Mammary epithelial cell (primary cell): ENCODE measurements at regions of chr5 and their contacts with region 1.

Region 1: GRCh38 chr5:1763548-1763911 is 36.1 kb downstream of the MRPL36 start:
- DNase-seq: peak; percentile 32
- H3K4me3 ChIP-seq: no peak overlapping the region
- H3K27ac ChIP-seq: no peak overlapping the region
- H3K4me1 ChIP-seq: no peaks in the 10 kb centered on the region
- H3K27me3 ChIP-seq: no peaks in the 10 kb centered on the region
- CTCF ChIP-seq: peak; percentile 76 to 80

Region 2: GRCh38 chr5:1851290-1851934 is 87.9 kb after region 1 on chr5:
- CTCF ChIA-PET with region 1: no interaction called
- dilution Hi-C with region 1: loop called (anchors 5 kb)
- in situ Hi-C with region 1: no loop called
- intact Hi-C with region 1: no loop called
- DNase-seq: no peak
- H3K4me3 ChIP-seq: no peak overlapping the region
- H3K27ac ChIP-seq: no peak overlapping the region
- H3K4me1 ChIP-seq: peaks cover 3% of the 10 kb centered on the region
- H3K27me3 ChIP-seq: no peaks in the 10 kb centered on the region
- CTCF ChIP-seq: no peak

Region 3: GRCh38 chr5:2017540-2018389 is 254.2 kb after region 1 on chr5:
- CTCF ChIA-PET with region 1: no interaction called
- dilution Hi-C with region 1: no loop called
- in situ Hi-C with region 1: loop called in 1 of 2 experiments (anchors 25 kb)
- intact Hi-C with region 1: loop called (anchors 1 kb)
- DNase-seq: no peak
- H3K4me3 ChIP-seq: no peak overlapping the region
- H3K27ac ChIP-seq: no peak overlapping the region
- H3K4me1 ChIP-seq: peaks cover 13% of the 10 kb centered on the region
- H3K27me3 ChIP-seq: no peaks in the 10 kb centered on the region
- CTCF ChIP-seq: peak; percentile 60 to 67

Region 4: GRCh38 chr5:2038321-2039179 is 275.0 kb after region 1 on chr5:
- CTCF ChIA-PET with region 1: interaction called, 5 read pairs
- dilution Hi-C with region 1: no loop called
- in situ Hi-C with region 1: no loop called
- intact Hi-C with region 1: loop called (anchors 1 kb)
- DNase-seq: peak; percentile 42
- H3K4me3 ChIP-seq: peak overlapping the region; percentile 53 to 58 (median 57)
- H3K27ac ChIP-seq: no peak overlapping the region
- H3K4me1 ChIP-seq: peaks cover 12% of the 10 kb centered on the region
- H3K27me3 ChIP-seq: no peaks in the 10 kb centered on the region
- CTCF ChIP-seq: peak; percentile 59 to 72

Region 5: GRCh38 chr5:2588850-2589501 is 825.4 kb after region 1 on chr5:
- CTCF ChIA-PET with region 1: no interaction called
- dilution Hi-C with region 1: no loop called
- in situ Hi-C with region 1: no loop called
- intact Hi-C with region 1: loop called (anchors 10 kb)
- DNase-seq: no peak
- H3K4me3 ChIP-seq: no peak overlapping the region
- H3K27ac ChIP-seq: no peak overlapping the region
- H3K4me1 ChIP-seq: no peaks in the 10 kb centered on the region
- H3K27me3 ChIP-seq: no peaks in the 10 kb centered on the region
- CTCF ChIP-seq: no peak

Region 6: DNA sequence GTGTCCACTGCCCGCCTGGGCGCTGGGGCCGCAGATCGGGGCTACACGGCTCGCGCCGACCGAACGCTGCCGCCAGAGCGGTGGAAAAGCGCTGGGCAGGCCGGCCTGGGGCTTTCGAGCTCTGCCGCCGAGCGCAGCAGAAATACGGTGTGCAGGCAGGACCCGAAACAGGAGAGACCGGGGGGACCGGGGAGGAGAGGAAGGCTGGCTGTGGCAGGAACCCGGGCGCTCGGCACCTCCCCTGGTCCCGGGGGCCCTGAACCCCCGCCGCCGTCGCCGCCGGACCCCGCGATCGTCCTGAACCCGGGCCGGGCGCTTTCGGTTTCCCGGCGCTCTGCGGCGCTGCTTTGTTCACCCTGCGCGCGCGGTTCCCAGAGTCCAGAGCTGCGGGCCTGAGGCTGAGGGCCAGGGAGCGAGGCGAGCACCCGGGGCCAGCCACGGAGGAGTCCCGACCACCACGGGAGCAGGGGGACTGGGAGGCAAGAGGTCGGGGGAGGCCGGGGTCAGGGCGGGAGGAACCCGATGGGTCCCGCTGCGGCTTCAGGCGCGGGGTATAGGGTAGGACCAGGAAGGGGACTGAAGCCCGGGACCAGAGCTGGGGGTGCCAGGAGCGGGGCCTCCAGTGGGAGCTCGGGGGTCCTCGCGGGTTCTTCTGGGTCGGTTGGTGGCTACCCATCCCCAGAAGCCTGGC is 976.0 kb after region 1 on chr5:
- CTCF ChIA-PET with region 1: no interaction called
- dilution Hi-C with region 1: no loop called
- in situ Hi-C with region 1: no loop called
- intact Hi-C with region 1: loop called (anchors 2 kb)
- DNase-seq: peak; percentile 68
- H3K4me3 ChIP-seq: peak overlapping the region; percentile 58 to 64 (median 64)
- H3K27ac ChIP-seq: peak overlapping the region; percentile 49
- H3K4me1 ChIP-seq: peaks cover 30% of the 10 kb centered on the region
- H3K27me3 ChIP-seq: no peaks in the 10 kb centered on the region
- CTCF ChIP-seq: no peak

Region 7: DNA sequence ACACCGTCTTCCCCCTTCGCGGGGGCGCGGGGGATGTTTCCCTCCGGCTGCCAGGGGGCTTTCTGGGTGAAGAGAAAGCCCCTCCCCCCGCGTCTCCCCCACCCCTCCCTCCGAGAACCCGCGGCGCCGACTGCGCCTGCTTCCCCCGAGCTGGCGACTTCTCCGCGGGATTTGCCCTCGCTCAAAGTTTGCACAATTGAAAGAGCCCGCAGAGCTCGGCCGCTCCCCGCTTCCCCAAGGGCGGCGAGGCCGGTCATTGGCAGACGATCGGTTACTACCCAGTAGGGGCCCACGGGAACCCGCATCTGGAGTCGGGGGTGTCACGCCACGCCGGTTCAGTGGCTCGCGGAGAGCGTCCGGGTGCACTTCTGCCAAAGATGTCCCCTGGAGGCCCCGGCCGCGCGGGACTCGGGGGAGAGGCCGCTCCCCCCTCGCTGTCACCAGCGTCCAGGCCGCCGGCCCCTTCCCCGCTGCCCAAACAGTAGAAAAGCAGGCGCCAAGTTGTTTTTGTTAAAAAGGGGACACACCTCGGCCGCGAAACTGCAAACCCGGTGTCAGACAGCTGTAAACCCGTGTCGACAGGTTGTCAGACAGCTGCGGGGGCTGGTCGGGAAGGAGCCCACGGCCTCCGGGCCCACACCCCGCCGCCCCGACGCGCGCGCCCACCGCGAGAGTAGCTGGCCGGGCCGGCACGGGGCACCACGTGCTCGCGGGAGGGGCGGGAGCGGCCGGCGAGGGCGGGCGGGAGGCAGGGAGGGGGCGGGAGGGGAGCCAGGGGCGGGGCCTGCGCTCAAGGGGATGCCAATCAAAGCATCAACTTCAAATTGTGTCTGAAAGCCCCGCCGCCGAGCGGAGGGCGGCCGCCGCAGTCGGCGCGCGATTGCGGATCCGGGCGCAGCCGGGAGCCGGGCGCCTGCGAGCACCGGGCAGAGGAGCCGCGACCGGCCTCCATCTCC is 1831.8 kb after region 1 on chr5 and contains the start of gene IRX1:
- CTCF ChIA-PET with region 1: no interaction called
- dilution Hi-C with region 1: no loop called
- in situ Hi-C with region 1: no loop called
- intact Hi-C with region 1: loop called (anchors 10 kb)
- DNase-seq: peak; percentile 73
- H3K4me3 ChIP-seq: peak within 1 kb of the TSS; percentile 82 to 100 (median 97)
- H3K27ac ChIP-seq: peak within 1 kb of the TSS; percentile 96
- H3K4me1 ChIP-seq: peaks cover 14% of the 10 kb centered on the region
- H3K27me3 ChIP-seq: no peaks in the 10 kb centered on the region
- CTCF ChIP-seq: no peak
- total RNA-seq, gene IRX1: 29.8 to 200 TPM